Dorsolateral prefrontal cortex (tissue), 120 donors: ENCODE measurements at regions of chrX and their contacts with region 1.

Region 1: DNA sequence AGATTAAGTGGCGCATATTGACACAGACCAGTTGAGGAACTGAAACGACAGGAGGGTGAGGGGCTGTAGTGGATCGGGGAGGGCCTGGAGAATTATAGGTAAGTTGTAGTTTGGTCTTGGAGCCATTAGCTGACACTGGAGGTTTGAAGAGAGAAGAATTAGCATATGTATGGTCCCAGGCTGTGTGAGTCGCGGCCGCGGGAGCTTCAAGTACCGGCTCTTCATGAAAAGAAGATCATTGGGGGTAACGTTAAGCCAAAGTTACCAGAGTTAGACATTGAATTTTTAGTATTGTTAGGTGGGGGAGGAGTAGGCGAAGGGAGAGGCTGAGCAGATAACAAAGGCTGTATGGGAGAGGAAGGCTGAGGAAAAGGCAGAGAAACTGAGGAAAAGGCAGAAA is 56.5 kb downstream of the ZNF674 start:
- DNase-seq: no peak
- H3K4me3 ChIP-seq: no peak overlapping the region
- H3K27ac ChIP-seq: no peak overlapping the region
- H3K27me3 ChIP-seq: peaks cover 0 to 16% (median 0%) of the 10 kb centered on the region in 45 donors
- CTCF ChIP-seq: no peak

Region 2: GRCh38 chrX:46436744-46437143 is 52.0 kb before region 1 on chrX:
- intact Hi-C with region 1: loop called in 1 of 2 experiments (anchors 2 kb)
- DNase-seq: no peak
- H3K4me3 ChIP-seq: no peak overlapping the region
- H3K27ac ChIP-seq: no peak overlapping the region
- H3K27me3 ChIP-seq: peaks cover 0 to 83% (median 11%) of the 10 kb centered on the region in 45 donors
- CTCF ChIP-seq: no peak

Region 3: GRCh38 chrX:46628460-46629371 is 140.0 kb after region 1 on chrX:
- intact Hi-C with region 1: no loop called
- DNase-seq: no peak
- H3K4me3 ChIP-seq: no peak overlapping the region
- H3K27ac ChIP-seq: peak overlapping the region in 13 of 59 donors; percentile 1 to 57 (median 29)
- H3K27me3 ChIP-seq: peaks cover 0 to 77% (median 22%) of the 10 kb centered on the region in 45 donors
- CTCF ChIP-seq: no peak

Region 4: GRCh38 chrX:47068214-47068613 is 579.5 kb after region 1 on chrX:
- intact Hi-C with region 1: no loop called
- DNase-seq: no peak
- H3K4me3 ChIP-seq: no peak overlapping the region
- H3K27ac ChIP-seq: no peak overlapping the region
- H3K27me3 ChIP-seq: peaks cover 0 to 78% (median 13%) of the 10 kb centered on the region in 45 donors
- CTCF ChIP-seq: no peak